Caco-2 (cell line): ENCODE measurements at regions of chr11 and their contacts with region 1.

Region 1: DNA sequence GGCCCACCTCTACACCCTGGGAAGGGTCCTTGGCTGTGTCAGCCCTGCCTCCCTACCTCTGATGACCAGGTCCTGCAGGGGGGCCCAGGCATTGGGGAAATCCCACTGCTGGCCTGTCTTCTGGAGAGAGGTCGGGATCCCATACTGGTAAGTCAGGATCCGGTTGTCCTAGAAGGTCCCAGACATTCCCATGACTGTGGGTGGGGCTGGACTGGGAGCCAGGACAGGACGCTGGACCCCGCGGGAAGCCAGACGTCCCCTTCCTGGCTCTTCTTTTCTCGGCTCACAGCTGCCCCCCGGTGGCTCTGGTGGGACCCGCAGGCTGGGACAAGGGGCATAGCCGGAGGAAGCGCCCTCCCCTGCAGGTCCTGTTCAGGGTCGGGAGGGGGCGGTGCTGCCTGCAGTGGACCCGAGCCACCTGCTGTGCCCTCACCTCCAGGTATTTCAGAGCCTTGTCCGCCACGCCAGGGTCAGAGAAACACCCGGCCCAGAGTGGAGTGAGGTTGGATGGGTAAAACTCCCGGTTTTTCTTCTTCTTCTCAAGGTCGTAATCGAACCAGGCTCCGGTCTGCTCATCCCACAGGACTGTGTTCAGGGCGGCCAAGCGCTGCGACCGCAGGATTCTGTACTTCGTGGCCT is 20.0 kb downstream of the TREH start:
- DNase-seq: peak; percentile 97 to 99
- H3K4me3 ChIP-seq: no peak overlapping the region
- H3K4me3 Mint-ChIP-seq: no peak overlapping the region
- H3K27ac Mint-ChIP-seq: peak overlapping the region; percentile 43
- H3K4me1 ChIP-seq: peaks cover 37% of the 10 kb centered on the region
- H3K4me1 Mint-ChIP-seq: peaks cover 11% of the 10 kb centered on the region
- H3K27me3 ChIP-seq: no peaks in the 10 kb centered on the region
- H3K27me3 Mint-ChIP-seq: no peaks in the 10 kb centered on the region
- CTCF ChIP-seq: peak; percentile 100

Region 2: DNA sequence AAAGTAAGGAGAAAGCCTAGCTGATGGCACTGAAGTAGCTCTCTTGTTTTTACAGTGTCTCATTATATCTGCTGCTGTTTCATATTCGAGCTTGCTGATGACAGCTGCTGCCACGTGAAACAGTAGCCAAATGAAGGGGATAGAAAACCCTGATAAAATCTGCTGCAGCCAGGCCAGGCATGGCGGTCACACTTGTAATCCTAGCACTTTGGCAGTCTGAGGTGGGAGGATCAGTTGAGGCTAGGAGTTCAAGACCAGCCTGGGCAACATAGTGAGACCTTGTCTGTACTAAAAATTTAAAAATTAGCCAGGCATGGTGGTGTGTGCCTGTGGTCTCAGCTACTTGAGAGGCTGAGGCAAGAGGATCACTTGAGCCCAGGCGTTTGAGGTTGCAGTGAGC is 107.1 kb before region 1 on chr11:
- CTCF ChIA-PET with region 1: no interaction called
- POLR2A ChIA-PET with region 1: no interaction called
- intact Hi-C with region 1: no loop called
- DNase-seq: peak in 1 of 2 experiments; percentile 12
- H3K4me3 ChIP-seq: no peak overlapping the region
- H3K4me3 Mint-ChIP-seq: no peak overlapping the region
- H3K27ac Mint-ChIP-seq: no peak overlapping the region
- H3K4me1 ChIP-seq: peaks cover 2% of the 10 kb centered on the region; the same call in 1 of the 2 replicates
- H3K4me1 Mint-ChIP-seq: no peaks in the 10 kb centered on the region
- H3K27me3 ChIP-seq: no peaks in the 10 kb centered on the region
- H3K27me3 Mint-ChIP-seq: no peaks in the 10 kb centered on the region
- CTCF ChIP-seq: no peak

Region 3: GRCh38 chr11:118592616-118593367 is 66.6 kb before region 1 on chr11:
- CTCF ChIA-PET with region 1: interaction called, 18 read pairs
- POLR2A ChIA-PET with region 1: no interaction called
- intact Hi-C with region 1: loop called (anchors 1 kb)
- DNase-seq: no peak
- H3K4me3 ChIP-seq: no peak overlapping the region
- H3K4me3 Mint-ChIP-seq: no peak overlapping the region
- H3K27ac Mint-ChIP-seq: no peak overlapping the region
- H3K4me1 ChIP-seq: no peaks in the 10 kb centered on the region
- H3K4me1 Mint-ChIP-seq: peaks cover 4% of the 10 kb centered on the region
- H3K27me3 ChIP-seq: no peaks in the 10 kb centered on the region
- H3K27me3 Mint-ChIP-seq: no peaks in the 10 kb centered on the region
- CTCF ChIP-seq: no peak

Region 4: DNA sequence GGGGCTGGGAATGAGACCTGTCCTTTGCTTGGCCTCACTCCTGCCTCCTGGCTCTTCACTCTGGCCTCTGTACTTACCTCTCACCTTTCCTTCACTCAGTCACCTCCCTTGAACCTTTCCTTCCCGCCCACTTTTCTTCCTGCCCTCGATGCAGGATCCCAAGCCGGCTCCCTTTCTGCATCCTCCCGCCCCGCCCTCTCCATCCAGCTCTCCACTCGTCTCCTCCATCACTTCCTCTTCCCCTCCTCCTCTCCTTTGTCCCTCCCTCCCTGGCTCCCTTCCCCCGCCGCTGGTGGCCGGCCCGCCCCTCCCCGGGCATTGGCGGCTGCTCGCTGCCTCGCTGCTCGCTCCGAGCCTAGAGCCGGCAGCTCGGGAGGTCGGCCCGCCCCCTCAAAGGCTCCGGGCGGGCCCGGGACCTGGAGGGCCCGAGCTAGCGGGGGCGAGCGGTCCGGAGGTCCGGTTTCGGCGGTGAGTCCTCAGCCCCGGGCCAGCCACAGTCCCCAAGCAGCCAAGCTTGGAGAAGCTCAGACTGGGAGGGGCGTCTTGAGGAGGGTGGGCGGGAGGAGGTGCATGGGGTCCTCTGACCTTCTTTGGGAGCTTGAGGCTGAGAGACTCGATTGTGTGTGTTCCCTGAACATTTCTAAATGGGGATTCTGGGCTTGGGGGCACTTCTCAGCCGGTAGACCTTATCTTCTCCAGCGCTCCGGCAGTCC is 38.2 kb before region 1 on chr11:
- CTCF ChIA-PET with region 1: interaction called, 16 read pairs
- POLR2A ChIA-PET with region 1: no interaction called
- intact Hi-C with region 1: loop called (anchors 1 kb)
- DNase-seq: peak; percentile 96 to 97
- H3K4me3 ChIP-seq: peak overlapping the region; percentile 63
- H3K4me3 Mint-ChIP-seq: peak overlapping the region; percentile 87
- H3K27ac Mint-ChIP-seq: peak overlapping the region; percentile 93
- H3K4me1 ChIP-seq: peaks cover 49% of the 10 kb centered on the region
- H3K4me1 Mint-ChIP-seq: peaks cover 37% of the 10 kb centered on the region
- H3K27me3 ChIP-seq: no peaks in the 10 kb centered on the region
- H3K27me3 Mint-ChIP-seq: no peaks in the 10 kb centered on the region
- CTCF ChIP-seq: no peak

Region 5: GRCh38 chr11:118634431-118635236 is 24.8 kb before region 1 on chr11:
- CTCF ChIA-PET with region 1: interaction called, 21 read pairs
- POLR2A ChIA-PET with region 1: no interaction called
- intact Hi-C with region 1: no loop called
- DNase-seq: peak in 1 of 2 experiments; percentile 70
- H3K4me3 ChIP-seq: peak overlapping the region; percentile 17
- H3K4me3 Mint-ChIP-seq: peak overlapping the region; percentile 54
- H3K27ac Mint-ChIP-seq: no peak overlapping the region
- H3K4me1 ChIP-seq: 0 out of 2 replicates have a peak, but pooled peaks cover 3% of the 10 kb centered on the region
- H3K4me1 Mint-ChIP-seq: peaks cover 7% of the 10 kb centered on the region
- H3K27me3 ChIP-seq: no peaks in the 10 kb centered on the region
- H3K27me3 Mint-ChIP-seq: no peaks in the 10 kb centered on the region
- CTCF ChIP-seq: peak in 1 of 2 experiments; percentile 52

Region 6: GRCh38 chr11:118757876-118758399 is 98.5 kb after region 1 on chr11:
- CTCF ChIA-PET with region 1: no interaction called
- POLR2A ChIA-PET with region 1: no interaction called
- intact Hi-C with region 1: no loop called
- DNase-seq: no peak
- H3K4me3 ChIP-seq: no peak overlapping the region
- H3K4me3 Mint-ChIP-seq: no peak overlapping the region
- H3K27ac Mint-ChIP-seq: no peak overlapping the region
- H3K4me1 ChIP-seq: no peaks in the 10 kb centered on the region
- H3K4me1 Mint-ChIP-seq: no peaks in the 10 kb centered on the region
- H3K27me3 ChIP-seq: no peaks in the 10 kb centered on the region
- H3K27me3 Mint-ChIP-seq: no peaks in the 10 kb centered on the region
- CTCF ChIP-seq: no peak

Region 7: GRCh38 chr11:118778898-118779297 is 119.5 kb after region 1 on chr11:
- CTCF ChIA-PET with region 1: no interaction called
- POLR2A ChIA-PET with region 1: no interaction called
- intact Hi-C with region 1: no loop called
- DNase-seq: no peak
- H3K4me3 ChIP-seq: no peak overlapping the region
- H3K4me3 Mint-ChIP-seq: no peak overlapping the region
- H3K27ac Mint-ChIP-seq: no peak overlapping the region
- H3K4me1 ChIP-seq: no peaks in the 10 kb centered on the region
- H3K4me1 Mint-ChIP-seq: no peaks in the 10 kb centered on the region
- H3K27me3 ChIP-seq: no peaks in the 10 kb centered on the region
- H3K27me3 Mint-ChIP-seq: no peaks in the 10 kb centered on the region
- CTCF ChIP-seq: no peak

Region 8: DNA sequence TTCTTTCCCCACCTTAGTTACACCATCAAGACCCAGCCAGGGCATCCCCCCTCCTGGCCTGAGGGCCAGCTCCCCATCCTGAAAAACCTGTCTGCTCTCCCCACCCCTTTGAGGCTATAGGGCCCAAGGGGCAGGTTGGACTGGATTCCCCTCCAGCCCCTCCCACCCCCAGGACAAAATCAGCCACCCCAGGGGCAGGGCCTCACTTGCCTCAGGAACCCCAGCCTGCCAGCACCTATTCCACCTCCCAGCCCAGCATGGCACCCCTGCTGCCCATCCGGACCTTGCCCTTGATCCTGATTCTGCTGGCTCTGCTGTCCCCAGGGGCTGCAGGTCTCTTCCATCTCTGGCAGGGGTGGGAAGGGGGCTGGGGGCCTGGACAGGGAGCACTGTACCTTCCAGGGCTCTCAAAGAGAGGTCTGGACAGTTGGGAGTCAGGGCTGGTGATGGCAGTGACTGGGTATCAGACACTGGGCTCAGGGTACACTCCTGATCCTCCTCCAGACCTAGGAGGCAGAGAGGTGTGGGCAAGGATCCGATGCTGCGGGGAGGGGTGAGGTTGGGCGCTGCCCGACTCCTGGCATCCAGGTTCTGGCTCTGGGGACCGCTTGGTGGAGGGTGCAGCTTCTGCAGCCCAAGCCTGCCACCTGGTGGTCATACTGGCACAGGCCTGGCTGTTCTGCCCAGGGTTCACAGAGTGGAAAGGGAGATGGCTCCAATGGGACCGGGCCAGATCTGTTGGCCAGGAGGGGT is 296.8 kb after region 1 on chr11 and contains the start of gene UPK2:
- CTCF ChIA-PET with region 1: interaction called, 4 read pairs
- POLR2A ChIA-PET with region 1: no interaction called
- intact Hi-C with region 1: loop called (anchors 1 kb)
- DNase-seq: peak; percentile 93 to 96
- H3K4me3 ChIP-seq: no peak within 1 kb of the TSS
- H3K4me3 Mint-ChIP-seq: peak within 1 kb of the TSS; percentile 5
- H3K27ac Mint-ChIP-seq: peak within 1 kb of the TSS; percentile 34
- H3K4me1 ChIP-seq: peaks cover 15% of the 10 kb centered on the region
- H3K4me1 Mint-ChIP-seq: peaks cover 15% of the 10 kb centered on the region
- H3K27me3 ChIP-seq: no peaks in the 10 kb centered on the region
- H3K27me3 Mint-ChIP-seq: peaks cover 2% of the 10 kb centered on the region
- CTCF ChIP-seq: peak; percentile 99 to 100
- total RNA-seq, gene UPK2: 1.8 and 3.5 TPM in 2 replicates